Mammary epithelial cell (primary cell): ENCODE measurements at regions of chr7 and their contacts with region 1.

Region 1: GRCh38 chr7:101278461-101279292 is 33.8 kb upstream of the FIS1 start:
- DNase-seq: no peak
- H3K4me3 ChIP-seq: no peak overlapping the region
- H3K27ac ChIP-seq: no peak overlapping the region
- H3K4me1 ChIP-seq: no peaks in the 10 kb centered on the region
- H3K27me3 ChIP-seq: no peaks in the 10 kb centered on the region
- CTCF ChIP-seq: no peak

Region 2: DNA sequence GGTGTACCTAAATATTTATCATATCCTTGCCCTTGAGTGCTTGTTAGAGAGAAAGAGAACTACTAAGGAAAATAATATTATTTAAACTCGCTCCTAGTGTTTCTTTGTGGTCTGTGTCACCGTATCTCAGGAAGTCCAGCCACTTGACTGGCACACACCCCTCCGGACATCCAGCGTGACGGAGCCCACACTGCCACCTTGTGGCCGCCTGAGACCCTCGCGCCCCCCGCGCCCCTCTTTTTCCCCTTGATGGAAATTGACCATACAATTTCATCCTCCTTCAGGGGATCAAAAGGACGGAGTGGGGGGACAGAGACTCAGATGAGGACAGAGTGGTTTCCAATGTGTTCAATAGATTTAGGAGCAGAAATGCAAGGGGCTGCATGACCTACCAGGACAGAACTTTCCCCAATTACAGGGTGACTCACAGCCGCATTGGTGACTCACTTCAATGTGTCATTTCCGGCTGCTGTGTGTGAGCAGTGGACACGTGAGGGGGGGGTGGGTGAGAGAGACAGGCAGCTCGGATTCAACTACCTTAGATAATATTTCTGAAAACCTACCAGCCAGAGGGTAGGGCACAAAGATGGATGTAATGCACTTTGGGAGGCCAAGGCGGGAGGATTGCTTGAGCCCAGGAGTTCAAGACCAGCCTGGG is 140.3 kb before region 1 on chr7:
- CTCF ChIA-PET with region 1: no interaction called
- dilution Hi-C with region 1: no loop called
- in situ Hi-C with region 1: no loop called
- intact Hi-C with region 1: no loop called
- DNase-seq: peak; percentile 96
- H3K4me3 ChIP-seq: no peak overlapping the region
- H3K27ac ChIP-seq: peak overlapping the region; percentile 55
- H3K4me1 ChIP-seq: peaks cover 52% of the 10 kb centered on the region
- H3K27me3 ChIP-seq: no peaks in the 10 kb centered on the region
- CTCF ChIP-seq: peak; percentile 34 to 59

Region 3: DNA sequence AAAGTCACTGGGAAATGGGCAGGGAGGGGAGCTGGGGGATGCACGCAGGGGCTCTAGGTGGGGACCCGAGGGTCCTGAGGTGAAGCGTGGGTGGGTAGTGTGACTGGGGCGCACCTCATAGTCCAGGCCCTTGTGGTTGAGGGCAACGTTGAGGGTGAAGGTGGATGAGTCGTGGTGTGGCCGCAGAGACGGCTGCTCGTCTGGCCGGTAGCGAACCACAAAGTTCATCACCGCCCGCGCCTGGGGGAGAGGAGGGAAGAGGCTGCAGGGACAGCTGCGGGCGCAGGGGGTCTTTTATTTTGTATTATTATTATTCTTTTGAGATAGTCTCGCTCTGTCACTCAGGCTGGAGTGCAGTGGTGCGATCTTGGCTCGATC is 72.0 kb before region 1 on chr7:
- CTCF ChIA-PET with region 1: no interaction called
- dilution Hi-C with region 1: no loop called
- in situ Hi-C with region 1: no loop called
- intact Hi-C with region 1: no loop called
- DNase-seq: no peak
- H3K4me3 ChIP-seq: no peak overlapping the region
- H3K27ac ChIP-seq: no peak overlapping the region
- H3K4me1 ChIP-seq: peaks cover 7% of the 10 kb centered on the region
- H3K27me3 ChIP-seq: peaks cover 10% of the 10 kb centered on the region
- CTCF ChIP-seq: no peak

Region 4: GRCh38 chr7:101494602-101495329 is 216.1 kb after region 1 on chr7:
- CTCF ChIA-PET with region 1: no interaction called
- dilution Hi-C with region 1: loop called (anchors 5 kb)
- in situ Hi-C with region 1: no loop called
- intact Hi-C with region 1: no loop called
- DNase-seq: no peak
- H3K4me3 ChIP-seq: no peak overlapping the region
- H3K27ac ChIP-seq: no peak overlapping the region
- H3K4me1 ChIP-seq: no peaks in the 10 kb centered on the region
- H3K27me3 ChIP-seq: no peaks in the 10 kb centered on the region
- CTCF ChIP-seq: no peak